ENCODE measurements at regions of chr12 and their contacts with region 1.

Region 1: GRCh38 chr12:111184161-111184560 is 184.7 kb downstream of the PHETA1 start:
- DNase-seq: no peak
- H3K4me3 Mint-ChIP-seq: no peak overlapping the region
- H3K27ac Mint-ChIP-seq: no peak overlapping the region
- H3K4me1 Mint-ChIP-seq: no peaks in the 10 kb centered on the region
- H3K27me3 Mint-ChIP-seq: peaks cover 99% of the 10 kb centered on the region
- CTCF ChIP-seq: no peak

Region 2: GRCh38 chr12:111269718-111270117 is 85.6 kb after region 1 on chr12:
- CTCF ChIA-PET with region 1: interaction called, 10 read pairs
- intact Hi-C with region 1: no loop called
- DNase-seq: no peak
- H3K4me3 Mint-ChIP-seq: no peak overlapping the region
- H3K27ac Mint-ChIP-seq: no peak overlapping the region
- H3K4me1 Mint-ChIP-seq: peaks cover 12% of the 10 kb centered on the region
- H3K27me3 Mint-ChIP-seq: peaks cover 90% of the 10 kb centered on the region
- CTCF ChIP-seq: no peak